Activated CD4-positive, alpha-beta T cell treated with anti-CD3 and anti-CD28 coated beads, Interleukin-2, amount 10 ng/mL, durations not matched to agents 7 days and 5 days (primary cell): ENCODE measurements at regions of chr20 and their contacts with region 1.

Region 1: DNA sequence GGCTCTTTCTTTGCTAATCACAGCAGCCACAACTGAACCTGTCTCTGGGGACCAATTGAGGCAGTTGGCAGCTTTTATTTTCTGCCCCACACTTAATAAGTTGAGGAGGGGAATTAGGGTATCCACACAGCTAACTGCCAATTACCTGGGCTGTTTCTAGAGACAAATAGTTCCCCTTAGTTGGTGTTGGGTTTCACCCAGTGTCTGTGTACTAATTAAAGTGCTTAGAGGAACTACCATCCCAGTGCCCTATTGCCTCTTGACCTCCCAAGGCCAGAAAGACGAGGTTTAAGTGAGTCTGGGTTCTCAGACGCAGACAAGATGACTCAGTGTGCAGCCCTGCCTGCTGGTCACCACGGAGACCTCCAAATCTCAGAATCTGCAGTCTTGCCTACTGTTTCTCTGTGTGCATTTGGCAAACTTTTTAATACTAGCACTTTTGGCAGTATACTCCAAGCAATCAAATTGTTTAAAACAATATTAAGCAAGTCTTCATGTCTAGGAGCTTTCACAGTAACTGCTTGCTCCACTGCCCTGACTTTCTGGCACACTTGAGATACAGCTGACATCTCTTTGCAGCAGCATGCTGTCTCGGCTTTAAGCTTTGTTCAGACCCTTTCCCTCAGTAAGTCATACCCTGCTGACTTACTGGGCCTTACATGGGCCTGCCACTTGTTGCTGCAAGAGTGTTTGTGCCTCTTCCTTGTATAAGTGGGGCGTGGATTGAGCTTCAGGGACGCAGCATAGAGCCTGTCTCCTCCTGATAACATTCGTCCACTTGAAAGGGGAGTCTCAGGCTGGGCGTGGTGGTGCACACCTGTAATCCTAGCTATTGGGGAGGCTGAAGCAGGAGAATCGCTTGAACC is 31.9 kb downstream of the STK35 start:
- DNase-seq: no peak
- H3K4me3 Mint-ChIP-seq: no peak overlapping the region
- H3K27ac Mint-ChIP-seq: no peak overlapping the region
- H3K4me1 Mint-ChIP-seq: peaks cover 6% of the 10 kb centered on the region
- H3K27me3 Mint-ChIP-seq: no peaks in the 10 kb centered on the region

Region 2: DNA sequence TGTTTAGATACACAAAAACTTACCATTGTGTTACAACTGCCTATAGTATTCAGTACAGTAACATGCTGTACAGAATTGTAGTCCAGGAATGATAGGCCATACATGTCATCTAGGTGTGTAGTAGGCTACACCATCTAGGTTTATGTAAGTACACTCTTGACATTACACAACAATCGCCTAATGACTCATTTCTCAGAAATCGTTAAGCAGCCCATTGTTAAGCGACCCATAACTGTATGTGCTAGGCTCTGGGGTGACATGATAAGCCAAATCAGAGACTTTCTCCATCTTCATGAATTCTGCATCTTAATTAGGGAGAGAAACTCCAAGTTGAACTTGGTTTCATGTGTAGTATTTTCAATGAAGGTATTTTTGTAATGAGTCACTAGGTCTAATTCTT is 14.8 kb before region 1 on chr20:
- CTCF ChIA-PET with region 1: no interaction called
- POLR2A ChIA-PET with region 1: no interaction called
- DNase-seq: no peak
- H3K4me3 Mint-ChIP-seq: no peak overlapping the region
- H3K27ac Mint-ChIP-seq: no peak overlapping the region
- H3K4me1 Mint-ChIP-seq: peaks cover 37% of the 10 kb centered on the region
- H3K27me3 Mint-ChIP-seq: no peaks in the 10 kb centered on the region

Region 3: GRCh38 chr20:2195614-2196013 is 62.1 kb after region 1 on chr20:
- CTCF ChIA-PET with region 1: no interaction called
- POLR2A ChIA-PET with region 1: interaction called, 11 read pairs
- DNase-seq: no peak
- H3K4me3 Mint-ChIP-seq: no peak overlapping the region
- H3K27ac Mint-ChIP-seq: no peak overlapping the region
- H3K4me1 Mint-ChIP-seq: no peaks in the 10 kb centered on the region
- H3K27me3 Mint-ChIP-seq: no peaks in the 10 kb centered on the region

Region 4: GRCh38 chr20:2237059-2237458 is 103.5 kb after region 1 on chr20:
- CTCF ChIA-PET with region 1: no interaction called
- POLR2A ChIA-PET with region 1: no interaction called
- DNase-seq: no peak
- H3K4me3 Mint-ChIP-seq: no peak overlapping the region
- H3K27ac Mint-ChIP-seq: no peak overlapping the region
- H3K4me1 Mint-ChIP-seq: no peaks in the 10 kb centered on the region
- H3K27me3 Mint-ChIP-seq: no peaks in the 10 kb centered on the region

Region 5: DNA sequence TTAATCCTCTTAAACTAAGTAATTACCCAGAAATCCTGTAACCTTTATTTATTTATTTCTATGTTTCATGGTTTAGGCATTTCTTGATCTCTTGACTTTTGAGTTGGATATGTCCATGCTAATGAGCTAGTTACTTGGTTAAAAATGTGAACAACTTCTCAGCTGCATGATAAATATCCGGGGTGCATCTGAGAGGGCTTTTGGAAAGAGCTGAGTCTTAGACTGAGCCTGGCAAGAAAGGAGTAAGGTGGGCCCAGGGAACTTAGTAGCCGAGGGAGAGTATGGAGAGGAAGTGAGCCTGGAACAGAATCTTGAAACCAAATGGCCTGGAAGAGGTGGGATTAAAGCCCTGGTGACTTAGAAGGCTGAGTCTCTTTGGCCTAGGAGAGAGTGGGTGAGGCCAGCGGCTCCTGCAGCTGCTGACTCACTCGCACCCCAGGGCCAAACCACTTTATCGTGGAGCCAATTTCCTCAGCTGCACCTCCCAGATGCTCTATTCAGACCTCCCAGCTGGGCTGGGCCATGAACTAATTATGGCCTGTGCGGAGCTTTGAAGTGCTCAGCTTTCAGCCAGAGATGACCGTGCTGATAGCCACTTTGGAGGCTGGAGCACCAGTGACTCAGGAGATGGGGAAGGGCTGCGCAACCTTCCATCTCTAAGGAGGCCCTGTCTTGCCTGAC is 181.3 kb after region 1 on chr20:
- CTCF ChIA-PET with region 1: no interaction called
- POLR2A ChIA-PET with region 1: no interaction called
- DNase-seq: no peak
- H3K4me3 Mint-ChIP-seq: no peak overlapping the region
- H3K27ac Mint-ChIP-seq: no peak overlapping the region
- H3K4me1 Mint-ChIP-seq: no peaks in the 10 kb centered on the region
- H3K27me3 Mint-ChIP-seq: peaks cover 7% of the 10 kb centered on the region